ENCODE measurements at regions of chr19 and their contacts with region 1.

Region 1: DNA sequence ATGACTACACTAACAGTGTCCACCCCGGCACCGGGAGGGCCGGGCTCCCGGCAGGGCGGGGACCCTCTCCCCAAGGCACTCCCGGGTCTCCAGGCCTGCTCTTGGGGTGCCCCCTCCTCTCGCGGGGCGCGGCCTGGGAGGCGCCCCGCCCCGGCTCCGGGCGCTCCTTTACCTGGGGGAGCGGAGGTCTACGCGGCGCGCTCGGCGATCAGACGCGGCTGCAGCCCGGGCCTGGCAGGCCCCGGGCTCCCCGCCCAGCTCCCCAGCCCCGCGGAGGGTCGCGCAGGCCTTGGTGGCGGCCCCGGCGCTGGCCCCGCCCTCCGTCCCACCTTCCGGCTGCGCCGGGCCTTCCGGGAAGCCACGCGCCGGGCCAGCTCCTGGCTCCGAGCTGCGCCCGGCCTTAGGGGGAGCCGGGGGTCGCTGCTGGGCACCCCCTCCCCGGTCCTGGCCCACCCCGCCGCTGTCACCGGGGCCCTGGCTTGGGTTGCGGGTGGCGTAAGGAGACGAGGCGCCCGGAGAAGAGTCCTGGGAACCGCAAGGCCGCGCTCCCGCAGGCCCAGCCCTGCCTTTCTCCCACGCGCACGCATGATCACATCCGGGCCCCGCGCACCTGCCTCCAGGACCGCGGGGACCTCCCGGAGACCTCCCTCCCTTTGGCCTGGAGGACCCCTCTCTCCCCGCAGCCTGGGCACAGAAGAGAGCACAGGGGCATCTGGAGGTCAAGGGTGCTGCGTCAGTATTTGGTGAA is at the start of gene C19orf12:
- DNase-seq: peak; percentile 63 to 77
- ATAC-seq: peak; percentile 83 to 86
- H3K4me3 ChIP-seq: peak within 1 kb of the TSS; percentile 82
- H3K27ac ChIP-seq: peak within 1 kb of the TSS; percentile 91 to 93
- H3K4me1 ChIP-seq: peaks cover 21% of the 10 kb centered on the region
- CTCF ChIP-seq: no peak
- EP300 ChIP-seq: no peak
- POLR2A ChIP-seq: peak; percentile 93
- RAD21 ChIP-seq: no peak
- polyA plus RNA-seq, gene C19orf12: 33.6 and 34.3 TPM in 2 replicates

Region 2: GRCh38 chr19:29622138-29623070 is 92.7 kb before region 1 on chr19:
- CTCF ChIA-PET with region 1: interaction called, 97 read pairs
- POLR2A ChIA-PET with region 1: interaction called, 4 read pairs
- DNase-seq: no peak
- ATAC-seq: peak; percentile 12 to 33; a peak in 3 of 6 replicates
- H3K4me3 ChIP-seq: no peak overlapping the region
- H3K27ac ChIP-seq: no peak overlapping the region
- H3K4me1 ChIP-seq: no peaks in the 10 kb centered on the region
- CTCF ChIP-seq: no peak
- EP300 ChIP-seq: no peak
- POLR2A ChIP-seq: no peak
- RAD21 ChIP-seq: no peak

Region 3: DNA sequence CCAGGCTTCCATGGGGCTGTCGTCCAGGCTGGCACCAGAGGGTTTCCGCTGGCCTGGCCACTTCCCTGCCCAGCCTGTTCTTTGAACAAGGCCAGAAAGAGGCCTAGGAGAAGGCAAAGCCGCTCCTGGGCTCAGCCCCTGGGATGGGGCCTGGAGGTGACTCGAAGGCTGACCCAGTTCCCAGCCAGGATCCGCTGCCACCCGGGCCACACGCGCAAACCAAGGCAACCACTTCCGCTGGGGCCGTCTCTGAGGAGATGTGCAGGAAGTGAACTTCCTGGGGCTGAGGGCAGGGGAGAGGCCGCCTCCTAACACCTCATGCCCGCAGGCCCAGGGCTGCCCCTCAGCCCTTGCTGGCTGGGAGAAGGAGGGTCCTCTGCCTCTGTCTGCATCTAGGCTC is 34.7 kb before region 1 on chr19:
- CTCF ChIA-PET with region 1: interaction called, 34 read pairs
- POLR2A ChIA-PET with region 1: no interaction called
- DNase-seq: no peak
- ATAC-seq: peak in 1 of 2 experiments; percentile 3; a peak in 3 of 6 replicates
- H3K4me3 ChIP-seq: no peak overlapping the region
- H3K27ac ChIP-seq: no peak overlapping the region
- H3K4me1 ChIP-seq: no peaks in the 10 kb centered on the region
- CTCF ChIP-seq: no peak
- EP300 ChIP-seq: no peak
- POLR2A ChIP-seq: no peak
- RAD21 ChIP-seq: no peak

Region 4: DNA sequence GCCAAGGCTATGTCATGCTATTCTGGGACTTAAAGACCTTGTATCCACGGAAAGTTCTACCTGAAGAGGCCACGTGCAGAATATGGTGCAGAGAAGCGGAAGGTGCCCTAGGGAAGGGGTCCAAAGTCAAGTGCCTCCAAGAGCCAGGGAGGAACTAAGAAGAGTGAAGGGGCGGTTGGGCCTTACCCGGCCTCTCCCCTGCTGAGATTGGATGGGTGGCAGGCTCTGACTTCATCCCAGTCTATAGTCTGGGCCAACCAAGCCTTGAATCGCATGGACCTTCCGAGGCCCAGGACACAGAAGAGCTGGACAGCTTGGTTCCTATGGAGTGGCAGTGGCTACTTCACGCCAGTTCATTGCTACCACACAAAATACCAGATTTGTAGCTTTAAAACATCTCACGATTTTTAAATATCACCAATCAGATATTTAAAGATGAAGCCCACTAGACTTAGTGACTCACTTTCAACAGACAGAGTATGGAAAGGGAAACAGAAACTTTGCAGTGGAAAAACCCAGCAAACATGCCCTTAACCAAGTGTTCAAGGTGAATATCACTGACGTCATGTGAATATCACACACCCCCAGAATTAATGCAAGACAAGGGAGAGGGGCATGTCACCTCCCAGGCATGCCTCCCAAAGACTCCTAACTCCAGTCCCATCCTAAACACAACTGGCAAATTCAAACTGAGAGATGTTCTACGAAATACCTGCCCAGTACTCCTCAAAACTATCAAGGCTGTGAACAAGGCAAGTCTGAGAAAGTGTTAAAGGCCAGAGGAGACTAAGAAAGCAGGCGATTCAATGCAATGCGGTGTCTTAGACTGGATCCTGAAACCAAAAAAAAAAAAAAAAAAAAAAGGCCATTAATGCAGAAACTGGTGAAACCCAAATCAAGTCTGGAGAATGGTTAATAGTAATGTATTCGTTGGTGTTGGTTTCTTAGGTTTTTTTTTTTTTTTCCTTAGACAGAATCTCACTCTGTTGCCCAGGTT is 10.3 kb before region 1 on chr19:
- CTCF ChIA-PET with region 1: interaction called, 42 read pairs
- POLR2A ChIA-PET with region 1: interaction called, 6 read pairs
- DNase-seq: no peak
- ATAC-seq: no peak
- H3K4me3 ChIP-seq: no peak overlapping the region
- H3K27ac ChIP-seq: no peak overlapping the region
- H3K4me1 ChIP-seq: no peaks in the 10 kb centered on the region
- CTCF ChIP-seq: no peak
- EP300 ChIP-seq: no peak
- POLR2A ChIP-seq: no peak
- RAD21 ChIP-seq: no peak

Region 5: DNA sequence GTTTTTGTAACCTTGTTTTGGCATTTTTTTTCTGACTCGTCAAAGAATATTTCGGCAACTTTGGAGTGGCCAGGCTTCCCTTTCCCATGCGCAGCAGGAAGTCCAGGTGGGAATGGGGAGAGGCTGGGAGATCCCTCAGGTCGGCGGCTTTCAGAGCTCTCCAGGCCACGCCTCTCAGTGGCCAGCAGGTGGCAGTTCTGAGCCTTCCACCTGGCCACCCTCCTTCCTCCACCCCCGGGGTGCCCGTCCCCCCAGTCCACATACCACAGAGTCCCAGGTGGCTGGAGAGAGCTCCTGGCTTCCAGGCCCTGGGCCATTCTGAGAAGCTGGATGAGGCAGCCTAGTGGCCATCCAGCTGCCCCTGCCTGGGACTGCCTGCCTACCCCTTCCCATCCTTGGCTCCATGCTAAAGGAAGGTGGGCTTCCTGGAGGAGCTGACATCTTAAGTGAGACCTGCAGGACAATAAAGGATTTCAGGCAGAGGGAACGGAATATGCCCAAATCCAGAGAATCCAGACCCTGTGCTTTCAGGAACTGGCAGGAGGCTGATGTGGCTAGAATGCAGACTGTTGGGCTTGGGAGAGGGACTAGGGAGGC is 143.0 kb after region 1 on chr19:
- CTCF ChIA-PET with region 1: interaction called, 25 read pairs
- POLR2A ChIA-PET with region 1: no interaction called
- DNase-seq: peak; percentile 60 to 63
- ATAC-seq: peak; percentile 78 to 86
- H3K4me3 ChIP-seq: no peak overlapping the region
- H3K27ac ChIP-seq: no peak overlapping the region
- H3K4me1 ChIP-seq: no peaks in the 10 kb centered on the region
- CTCF ChIP-seq: peak; percentile 68
- EP300 ChIP-seq: no peak
- POLR2A ChIP-seq: no peak
- RAD21 ChIP-seq: peak; percentile 63

Region 6: DNA sequence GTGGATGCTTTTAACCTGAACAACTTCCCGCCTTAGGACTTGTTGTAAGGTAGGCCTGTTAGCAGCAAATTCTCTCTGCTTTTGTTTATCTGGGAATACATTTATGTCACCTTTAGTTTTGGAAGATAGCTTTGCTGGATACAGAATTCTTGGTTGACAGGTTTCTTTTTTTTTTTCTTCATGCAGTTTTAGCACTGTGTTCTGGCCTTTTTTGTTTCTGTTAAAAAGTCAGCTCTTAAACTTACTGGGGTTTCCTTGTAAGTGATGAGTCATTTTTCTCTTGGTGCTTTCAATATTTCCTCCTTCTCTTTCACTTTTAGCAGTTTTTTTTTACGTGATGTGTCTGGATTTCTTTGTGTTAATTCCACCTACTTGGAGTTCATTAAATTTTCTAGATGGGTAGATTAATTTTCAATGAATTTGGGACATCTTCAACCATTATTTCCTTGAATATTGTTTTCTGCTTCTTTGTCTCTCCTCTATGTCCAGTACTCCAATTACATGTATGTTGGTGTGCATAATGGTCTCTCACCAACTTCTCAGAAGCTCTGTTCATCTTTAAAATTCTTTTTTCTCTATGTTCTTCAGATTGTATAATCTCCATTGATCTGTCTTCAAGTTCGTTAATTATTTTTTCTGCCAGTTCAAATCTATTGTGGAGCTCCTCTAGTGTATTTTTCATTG is 468.8 kb after region 1 on chr19:
- CTCF ChIA-PET with region 1: no interaction called
- POLR2A ChIA-PET with region 1: no interaction called
- DNase-seq: no peak
- ATAC-seq: no peak
- H3K4me3 ChIP-seq: no peak overlapping the region
- H3K27ac ChIP-seq: no peak overlapping the region
- H3K4me1 ChIP-seq: no peaks in the 10 kb centered on the region
- CTCF ChIP-seq: no peak
- EP300 ChIP-seq: no peak
- POLR2A ChIP-seq: no peak
- RAD21 ChIP-seq: no peak

Measured in A549 (cell line).